Endothelial cell of umbilical vein (primary cell): ENCODE measurements at regions of chr1 and their contacts with region 1.

Region 1: DNA sequence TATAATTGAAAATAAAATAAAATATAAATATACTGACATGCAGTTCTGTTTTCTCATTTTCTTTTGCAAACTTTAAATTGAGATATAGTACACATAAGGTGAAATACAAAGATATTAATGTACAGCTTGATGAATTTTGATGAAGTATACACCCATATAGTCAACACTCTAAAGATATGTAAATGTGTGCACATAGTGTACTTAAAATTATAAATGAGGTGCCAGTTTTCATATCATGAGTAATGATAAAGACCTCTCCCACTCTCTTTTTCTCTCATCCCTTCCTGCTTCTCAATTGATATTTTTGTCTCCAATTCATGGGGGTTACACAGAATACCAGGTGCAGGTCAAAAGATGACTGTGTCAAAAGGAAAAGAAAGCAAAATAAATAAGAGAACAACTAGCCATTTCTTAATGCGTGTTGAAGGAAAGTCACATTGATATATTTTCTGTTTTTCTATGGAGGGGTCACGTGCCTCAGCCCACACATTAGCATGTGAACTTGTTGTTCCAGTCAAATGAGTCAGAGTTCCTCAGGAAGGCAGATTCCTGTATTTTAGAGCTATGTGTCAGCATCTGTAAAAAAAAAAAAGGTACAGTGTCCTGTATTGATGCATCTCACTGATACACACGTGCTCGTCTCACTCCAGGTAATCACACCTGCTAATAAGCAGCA is 64.3 kb upstream of the HOOK1 start:
- DNase-seq: peak; percentile 97
- H3K4me3 ChIP-seq: peak overlapping the region in 1 of 3 experiments; percentile 19
- H3K27ac ChIP-seq: peak overlapping the region; percentile 87
- H3K4me1 ChIP-seq: peaks cover 30% of the 10 kb centered on the region
- H3K27me3 ChIP-seq: no peaks in the 10 kb centered on the region
- CTCF ChIP-seq: no peak
- POLR2A ChIP-seq: no peak

Region 2: DNA sequence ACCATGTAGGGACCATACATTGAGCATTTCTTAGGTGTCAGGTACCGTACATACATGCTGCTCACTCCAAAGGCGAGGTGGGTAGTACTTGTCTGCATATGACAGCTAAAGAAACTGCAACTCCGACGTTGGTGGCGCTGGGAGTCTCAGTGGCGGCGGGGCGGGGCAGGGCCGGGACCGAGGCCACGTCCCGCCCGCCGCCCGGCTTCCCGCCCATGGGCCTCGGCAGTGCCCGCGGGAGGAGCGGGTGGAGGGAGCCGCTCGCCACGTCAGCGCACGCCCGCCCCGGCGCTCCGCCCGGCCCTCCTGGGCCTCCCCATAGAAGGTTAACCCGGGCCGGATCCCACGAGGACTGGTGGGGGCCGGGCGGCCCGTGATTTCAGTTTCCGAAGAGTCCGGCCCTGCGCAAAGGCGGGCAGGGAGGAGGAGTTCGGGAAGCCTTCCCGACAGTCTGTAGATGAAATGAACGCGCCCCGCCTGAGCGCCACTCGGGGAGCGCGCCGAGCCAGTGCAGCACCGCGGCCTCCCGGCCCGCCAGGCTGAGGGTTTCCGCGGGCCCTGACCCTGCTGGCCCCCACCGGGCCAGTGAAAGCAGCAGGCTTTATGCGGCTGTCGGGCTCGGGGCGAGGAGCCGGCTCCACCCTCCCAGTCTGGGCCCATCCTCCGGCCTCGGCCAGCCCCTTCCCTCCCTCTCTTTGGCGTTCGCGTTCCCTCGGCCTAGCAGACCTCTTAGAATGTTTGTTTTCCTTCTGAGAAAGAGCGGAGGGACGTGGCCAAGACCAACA is 846.8 kb before region 1 on chr1:
- CTCF ChIA-PET with region 1: no interaction called
- POLR2A ChIA-PET with region 1: no interaction called
- dilution Hi-C with region 1: no loop called
- intact Hi-C with region 1: loop called (anchors 2 kb)
- DNase-seq: peak; percentile 94
- H3K4me3 ChIP-seq: peak overlapping the region in 2 of 3 experiments; percentile 24 to 41
- H3K27ac ChIP-seq: peak overlapping the region; percentile 64
- H3K4me1 ChIP-seq: peaks cover 46% of the 10 kb centered on the region
- H3K27me3 ChIP-seq: no peaks in the 10 kb centered on the region
- CTCF ChIP-seq: no peak
- POLR2A ChIP-seq: peak; percentile 95

Region 3: GRCh38 chr1:59707178-59707791 is 43.2 kb before region 1 on chr1:
- CTCF ChIA-PET with region 1: interaction called, 3 read pairs
- POLR2A ChIA-PET with region 1: no interaction called
- dilution Hi-C with region 1: no loop called
- intact Hi-C with region 1: loop called (anchors 2 kb)
- DNase-seq: peak; percentile 86
- H3K4me3 ChIP-seq: no peak overlapping the region
- H3K27ac ChIP-seq: no peak overlapping the region
- H3K4me1 ChIP-seq: peaks cover 12% of the 10 kb centered on the region
- H3K27me3 ChIP-seq: no peaks in the 10 kb centered on the region
- CTCF ChIP-seq: no peak
- POLR2A ChIP-seq: no peak

Region 4: DNA sequence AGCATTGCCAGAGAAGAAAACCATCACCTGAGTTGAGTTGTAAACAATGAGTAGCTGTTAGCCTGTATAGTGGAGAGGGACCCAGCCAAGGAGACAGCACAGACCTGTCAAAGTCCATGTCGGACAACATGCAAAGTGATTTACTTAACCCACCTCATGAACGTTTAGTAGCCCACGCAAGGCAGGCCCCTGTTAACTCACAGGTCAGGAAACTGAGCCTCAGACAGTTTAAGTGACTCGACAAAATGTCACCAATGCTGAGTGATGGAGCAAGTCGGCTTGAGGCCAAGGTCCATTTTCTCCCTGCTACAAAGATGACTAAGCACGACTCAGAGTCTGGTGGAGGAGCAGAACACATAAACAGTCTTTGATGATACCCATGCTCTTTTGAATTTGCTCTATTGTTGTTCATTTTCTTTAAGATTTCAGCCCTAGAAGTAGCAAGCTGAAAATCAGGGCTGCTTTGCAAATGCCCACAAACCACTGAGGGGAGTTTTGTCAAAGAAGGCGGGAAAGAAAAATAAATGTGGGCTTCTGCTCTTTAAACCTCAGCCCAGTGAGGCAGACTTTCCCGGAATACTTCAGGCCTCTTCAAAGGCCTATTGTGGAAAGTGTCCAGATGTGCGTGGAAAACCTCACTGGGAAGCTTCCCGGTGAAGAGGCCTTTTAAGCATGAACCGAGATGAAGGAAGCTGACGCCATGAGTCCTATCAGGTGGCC is 19.5 kb before region 1 on chr1:
- CTCF ChIA-PET with region 1: interaction called, 3 read pairs
- POLR2A ChIA-PET with region 1: no interaction called
- dilution Hi-C with region 1: no loop called
- intact Hi-C with region 1: loop called (anchors 1 kb)
- DNase-seq: peak; percentile 93
- H3K4me3 ChIP-seq: no peak overlapping the region
- H3K27ac ChIP-seq: peak overlapping the region; percentile 79
- H3K4me1 ChIP-seq: peaks cover 15% of the 10 kb centered on the region
- H3K27me3 ChIP-seq: no peaks in the 10 kb centered on the region
- CTCF ChIP-seq: no peak
- POLR2A ChIP-seq: peak; percentile 47